Activated CD4-positive, alpha-beta T cell treated with anti-CD3 and anti-CD28 coated beads, Interleukin-2, amount 10 ng/mL, durations not matched to agents 24 days and 14 days (primary cell): ENCODE measurements at regions of chr9 and their contacts with region 1.

Region 1: GRCh38 chr9:89318123-89319014 is at the start of gene SECISBP2:
- DNase-seq: peak; percentile 98
- H3K4me3 Mint-ChIP-seq: peak within 1 kb of the TSS; percentile 95
- H3K27ac Mint-ChIP-seq: peak within 1 kb of the TSS; percentile 99
- H3K4me1 Mint-ChIP-seq: peaks cover 66% of the 10 kb centered on the region
- H3K27me3 Mint-ChIP-seq: no peaks in the 10 kb centered on the region
- total RNA-seq, gene SECISBP2: 48.6 and 50.7 TPM in 2 replicates

Region 2: GRCh38 chr9:88243736-88244135 is 1074.6 kb before region 1 on chr9:
- intact Hi-C with region 1: no loop called
- DNase-seq: no peak
- H3K4me3 Mint-ChIP-seq: no peak overlapping the region
- H3K27ac Mint-ChIP-seq: no peak overlapping the region
- H3K4me1 Mint-ChIP-seq: no peaks in the 10 kb centered on the region
- H3K27me3 Mint-ChIP-seq: peaks cover 37% of the 10 kb centered on the region

Region 3: DNA sequence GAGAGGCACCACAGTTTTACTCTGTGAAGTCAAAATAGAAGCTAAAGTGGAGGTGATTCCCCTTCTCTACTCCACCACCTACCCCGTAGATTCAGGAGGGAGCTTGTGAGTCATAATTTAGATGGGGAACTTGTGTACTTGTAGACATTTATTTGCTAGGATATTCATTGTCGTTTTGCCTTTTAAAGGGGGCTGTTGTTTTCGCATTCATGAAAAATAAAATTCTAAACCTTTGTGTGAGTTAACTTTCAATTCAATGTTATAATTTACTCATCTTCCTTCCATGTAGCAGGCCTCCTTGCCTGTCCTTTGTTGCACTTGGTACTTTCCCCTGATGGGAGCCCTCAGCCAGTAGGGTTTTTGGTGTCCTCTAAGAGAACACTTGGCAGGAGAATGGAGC is 22.0 kb after region 1 on chr9:
- intact Hi-C with region 1: loop called (anchors 2 kb)
- DNase-seq: no peak
- H3K4me3 Mint-ChIP-seq: peak overlapping the region; percentile 20
- H3K27ac Mint-ChIP-seq: peak overlapping the region; percentile 73
- H3K4me1 Mint-ChIP-seq: peaks cover 29% of the 10 kb centered on the region
- H3K27me3 Mint-ChIP-seq: no peaks in the 10 kb centered on the region

Region 4: DNA sequence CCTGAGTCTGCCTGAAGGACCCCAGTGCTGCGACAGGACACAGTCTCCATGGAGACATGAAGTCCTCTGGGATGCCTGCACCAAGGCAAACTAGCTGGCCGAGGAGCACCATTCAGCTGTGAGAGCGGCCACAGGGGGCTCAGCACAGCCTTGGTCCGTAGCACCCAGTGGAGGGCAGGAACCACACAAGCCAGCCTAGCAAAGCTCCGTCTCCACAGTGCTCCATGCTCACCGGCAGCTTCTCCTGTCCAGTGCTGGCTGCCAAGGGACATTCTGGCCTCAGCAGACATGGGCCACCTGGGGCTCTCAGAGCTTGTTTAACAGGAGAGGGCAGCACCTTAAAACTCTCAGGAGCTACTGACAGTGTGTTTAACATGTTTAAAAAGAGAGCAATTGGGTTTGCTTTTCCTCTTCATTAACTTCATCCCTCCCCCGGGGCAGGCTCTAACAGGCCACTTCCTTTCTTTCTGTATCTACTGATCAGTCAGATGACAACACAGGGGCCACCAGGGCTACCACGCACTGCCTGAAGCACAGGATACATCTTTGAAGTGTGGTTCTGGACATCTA is 56.9 kb after region 1 on chr9:
- intact Hi-C with region 1: no loop called
- DNase-seq: peak; percentile 81
- H3K4me3 Mint-ChIP-seq: peak overlapping the region; percentile 42
- H3K27ac Mint-ChIP-seq: peak overlapping the region; percentile 87
- H3K4me1 Mint-ChIP-seq: peaks cover 39% of the 10 kb centered on the region
- H3K27me3 Mint-ChIP-seq: no peaks in the 10 kb centered on the region

Region 5: GRCh38 chr9:89466451-89467277 is 148.3 kb after region 1 on chr9:
- intact Hi-C with region 1: loop called (anchors 10 kb)
- DNase-seq: peak; percentile 82
- H3K4me3 Mint-ChIP-seq: peak overlapping the region; percentile 89
- H3K27ac Mint-ChIP-seq: peak overlapping the region; percentile 96
- H3K4me1 Mint-ChIP-seq: peaks cover 92% of the 10 kb centered on the region
- H3K27me3 Mint-ChIP-seq: no peaks in the 10 kb centered on the region

Region 6: GRCh38 chr9:89497978-89498851 is 179.8 kb after region 1 on chr9 and contains the start of gene SEMA4D:
- intact Hi-C with region 1: loop called (anchors 2 kb)
- DNase-seq: peak; percentile 86
- H3K4me3 Mint-ChIP-seq: peak within 1 kb of the TSS; percentile 92
- H3K27ac Mint-ChIP-seq: peak within 1 kb of the TSS; percentile 94
- H3K4me1 Mint-ChIP-seq: peaks cover 79% of the 10 kb centered on the region
- H3K27me3 Mint-ChIP-seq: no peaks in the 10 kb centered on the region
- total RNA-seq, gene SEMA4D: 368 and 370 TPM in 2 replicates

Region 7: GRCh38 chr9:89549031-89549644 is 230.8 kb after region 1 on chr9:
- intact Hi-C with region 1: loop called (anchors 1 kb)
- DNase-seq: peak; percentile 95
- H3K4me3 Mint-ChIP-seq: peak overlapping the region; percentile 28
- H3K27ac Mint-ChIP-seq: peak overlapping the region; percentile 62
- H3K4me1 Mint-ChIP-seq: peaks cover 19% of the 10 kb centered on the region
- H3K27me3 Mint-ChIP-seq: peaks cover 11% of the 10 kb centered on the region

Region 8: DNA sequence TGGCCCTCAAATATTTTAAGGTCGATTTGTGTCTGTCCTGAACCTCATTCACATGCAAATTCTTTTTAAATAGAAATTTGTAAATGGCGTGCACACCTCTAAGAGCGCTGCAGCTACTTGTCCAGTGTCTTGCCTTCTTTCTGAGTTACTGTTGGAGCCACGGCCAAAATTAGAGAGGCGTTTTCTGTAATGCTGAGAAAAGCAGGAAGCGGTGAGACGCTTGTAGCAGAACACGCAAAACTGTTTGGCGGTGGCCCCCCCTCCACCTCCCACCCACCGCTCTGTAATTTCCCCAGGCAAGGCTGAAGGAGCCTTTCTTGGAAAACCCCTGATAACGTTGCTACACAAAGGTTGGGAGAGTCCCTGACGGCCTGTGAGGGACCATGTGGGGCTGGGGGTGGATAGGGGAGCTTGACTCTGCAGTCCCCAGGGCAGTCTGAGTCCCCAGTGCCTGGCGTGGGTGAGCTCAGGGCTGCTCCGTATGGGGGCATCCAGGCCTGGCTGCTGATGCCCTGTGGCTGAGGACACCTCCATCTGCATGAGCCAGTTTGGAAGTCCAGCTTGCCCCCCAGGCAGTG is 382.9 kb after region 1 on chr9:
- intact Hi-C with region 1: loop called (anchors 10 kb)
- DNase-seq: peak; percentile 93
- H3K4me3 Mint-ChIP-seq: peak overlapping the region; percentile 99
- H3K27ac Mint-ChIP-seq: peak overlapping the region; percentile 98
- H3K4me1 Mint-ChIP-seq: peaks cover 73% of the 10 kb centered on the region
- H3K27me3 Mint-ChIP-seq: no peaks in the 10 kb centered on the region